ENCODE measurements at regions of chr3 and their contacts with region 1.

Region 1: DNA sequence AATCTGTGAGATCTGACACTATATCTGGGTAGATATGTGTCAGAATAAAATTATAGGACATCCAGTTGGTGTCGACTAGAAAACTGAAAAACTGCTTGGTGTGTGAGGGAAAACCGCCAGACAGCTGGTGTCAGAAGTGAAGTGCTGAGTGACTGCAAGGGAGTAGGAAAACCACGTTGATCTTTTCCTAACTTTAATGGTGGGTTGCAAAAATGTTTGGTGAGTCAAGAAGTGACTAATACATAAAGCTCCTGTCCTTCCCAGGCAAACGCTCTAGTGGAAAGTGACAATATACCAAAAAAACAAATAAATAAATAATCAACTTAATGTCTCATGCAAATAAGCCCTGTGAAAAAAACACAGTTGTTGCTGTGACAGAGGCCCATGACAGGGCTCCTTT is 7.3 kb upstream of the CD96 start:
- DNase-seq: no peak
- H3K4me3 ChIP-seq: no peak overlapping the region
- H3K27ac ChIP-seq: no peak overlapping the region
- H3K4me1 ChIP-seq: no peaks in the 10 kb centered on the region; a peak in 1 of 7 replicates
- H3K27me3 ChIP-seq: no peaks in the 10 kb centered on the region
- CTCF ChIP-seq: no peak
- EP300 ChIP-seq: no peak
- POLR2A ChIP-seq: no peak
- RAD21 ChIP-seq: no peak

Region 2: GRCh38 chr3:111509310-111509709 is 25.4 kb before region 1 on chr3:
- CTCF ChIA-PET with region 1: no interaction called
- POLR2A ChIA-PET with region 1: no interaction called
- DNase-seq: no peak
- H3K4me3 ChIP-seq: no peak overlapping the region
- H3K27ac ChIP-seq: no peak overlapping the region
- H3K4me1 ChIP-seq: no peaks in the 10 kb centered on the region
- H3K27me3 ChIP-seq: no peaks in the 10 kb centered on the region
- CTCF ChIP-seq: no peak
- EP300 ChIP-seq: no peak
- POLR2A ChIP-seq: no peak
- RAD21 ChIP-seq: no peak

Region 3: GRCh38 chr3:111521891-111522290 is 12.8 kb before region 1 on chr3:
- CTCF ChIA-PET with region 1: interaction called, 14 read pairs
- POLR2A ChIA-PET with region 1: no interaction called
- DNase-seq: no peak
- H3K4me3 ChIP-seq: no peak overlapping the region
- H3K27ac ChIP-seq: no peak overlapping the region
- H3K4me1 ChIP-seq: no peaks in the 10 kb centered on the region; a peak in 1 of 7 replicates
- H3K27me3 ChIP-seq: no peaks in the 10 kb centered on the region
- CTCF ChIP-seq: no peak
- EP300 ChIP-seq: no peak
- POLR2A ChIP-seq: no peak
- RAD21 ChIP-seq: no peak

Region 4: DNA sequence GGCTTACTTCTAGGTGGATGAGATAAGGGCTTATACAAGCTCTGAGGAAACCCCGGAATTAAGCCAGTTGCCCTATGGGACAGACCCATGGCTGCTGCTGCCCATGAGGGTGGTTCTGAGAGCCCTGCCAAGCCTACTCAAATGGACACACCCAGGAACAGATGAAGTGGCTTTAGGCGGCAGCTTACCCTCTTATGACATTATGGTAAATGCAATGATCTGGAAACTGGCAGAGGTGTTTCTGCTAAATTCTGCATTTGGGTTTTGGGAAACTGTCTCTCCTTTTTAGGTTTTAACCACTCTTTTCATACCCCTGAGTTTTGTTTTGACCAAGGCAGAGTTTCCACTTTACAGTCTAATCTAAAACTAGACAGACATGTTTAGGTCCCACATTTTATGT is 69.4 kb after region 1 on chr3:
- CTCF ChIA-PET with region 1: no interaction called
- POLR2A ChIA-PET with region 1: no interaction called
- DNase-seq: no peak
- H3K4me3 ChIP-seq: no peak overlapping the region
- H3K27ac ChIP-seq: no peak overlapping the region
- H3K4me1 ChIP-seq: no peaks in the 10 kb centered on the region
- H3K27me3 ChIP-seq: no peaks in the 10 kb centered on the region
- CTCF ChIP-seq: no peak
- EP300 ChIP-seq: no peak
- POLR2A ChIP-seq: no peak
- RAD21 ChIP-seq: no peak

Region 5: GRCh38 chr3:111616417-111617105 is 81.9 kb after region 1 on chr3:
- CTCF ChIA-PET with region 1: no interaction called
- POLR2A ChIA-PET with region 1: no interaction called
- DNase-seq: no peak
- H3K4me3 ChIP-seq: no peak overlapping the region
- H3K27ac ChIP-seq: no peak overlapping the region
- H3K4me1 ChIP-seq: no peaks in the 10 kb centered on the region
- H3K27me3 ChIP-seq: no peaks in the 10 kb centered on the region
- CTCF ChIP-seq: no peak
- EP300 ChIP-seq: no peak
- POLR2A ChIP-seq: no peak
- RAD21 ChIP-seq: 0 out of 4 replicates have a peak, but pooled peaks of 1 of the 2 experiments have one; percentile 2